Activated T-helper 2 cell treated with anti-CD3 and anti-CD28 coated beads, Interferon-gamma antibody, Interleukin-2, Interleukin-4, amounts not matched to agents 10 μg/mL and 5 μg/mL and 100 μg/mL, durations not matched to agents 14 hours and 24 hours and 36 hours (primary cell): ENCODE measurements at regions of chr1 and their contacts with region 1.

Region 1: DNA sequence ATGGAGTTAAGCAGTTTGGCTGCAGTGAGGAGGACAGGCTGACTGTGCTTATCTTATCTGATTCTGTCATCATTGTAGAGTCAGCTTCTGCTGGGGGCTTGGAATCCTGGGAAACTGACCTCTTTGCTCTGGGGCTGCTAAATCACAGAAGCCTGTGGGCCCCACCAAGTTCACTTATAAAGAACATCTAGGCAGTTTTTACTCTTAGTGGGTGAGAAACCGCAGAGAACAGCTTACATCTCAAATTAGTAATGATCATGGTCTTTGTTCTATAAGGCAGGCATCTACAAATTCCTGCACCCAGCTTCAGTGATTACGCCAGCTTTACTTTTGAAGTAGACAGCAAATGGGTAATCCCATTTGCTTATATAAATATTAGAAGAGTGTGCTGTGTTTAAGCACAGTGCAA is 75.7 kb downstream of the ZC3H11B start:
- DNase-seq: no peak
- H3K4me3 Mint-ChIP-seq: no peak overlapping the region
- H3K27ac Mint-ChIP-seq: no peak overlapping the region
- H3K4me1 Mint-ChIP-seq: peaks cover 4% of the 10 kb centered on the region
- H3K27me3 Mint-ChIP-seq: peaks cover 5% of the 10 kb centered on the region

Region 2: DNA sequence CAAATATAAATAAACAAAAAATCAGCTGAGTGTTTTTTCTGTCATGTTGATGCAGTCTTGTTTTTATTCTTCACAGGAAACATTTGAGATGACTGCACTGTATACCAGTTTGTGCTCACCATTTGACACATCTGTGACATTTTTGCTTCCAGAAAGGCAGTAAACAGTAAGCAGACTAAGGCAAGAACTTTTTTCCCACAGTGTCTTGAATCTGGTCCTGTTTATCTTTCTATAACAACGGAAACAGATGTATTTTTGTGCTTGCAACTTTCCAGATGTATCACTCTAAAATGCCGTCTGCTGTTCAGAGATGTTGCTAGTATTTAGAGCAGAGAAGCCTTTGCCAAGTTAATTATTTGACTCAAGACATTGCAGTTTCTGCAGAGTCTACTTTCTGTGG is 29.8 kb before region 1 on chr1:
- intact Hi-C with region 1: no loop called
- DNase-seq: no peak
- H3K4me3 Mint-ChIP-seq: no peak overlapping the region
- H3K27ac Mint-ChIP-seq: no peak overlapping the region
- H3K4me1 Mint-ChIP-seq: no peaks in the 10 kb centered on the region
- H3K27me3 Mint-ChIP-seq: peaks cover 2% of the 10 kb centered on the region

Region 3: DNA sequence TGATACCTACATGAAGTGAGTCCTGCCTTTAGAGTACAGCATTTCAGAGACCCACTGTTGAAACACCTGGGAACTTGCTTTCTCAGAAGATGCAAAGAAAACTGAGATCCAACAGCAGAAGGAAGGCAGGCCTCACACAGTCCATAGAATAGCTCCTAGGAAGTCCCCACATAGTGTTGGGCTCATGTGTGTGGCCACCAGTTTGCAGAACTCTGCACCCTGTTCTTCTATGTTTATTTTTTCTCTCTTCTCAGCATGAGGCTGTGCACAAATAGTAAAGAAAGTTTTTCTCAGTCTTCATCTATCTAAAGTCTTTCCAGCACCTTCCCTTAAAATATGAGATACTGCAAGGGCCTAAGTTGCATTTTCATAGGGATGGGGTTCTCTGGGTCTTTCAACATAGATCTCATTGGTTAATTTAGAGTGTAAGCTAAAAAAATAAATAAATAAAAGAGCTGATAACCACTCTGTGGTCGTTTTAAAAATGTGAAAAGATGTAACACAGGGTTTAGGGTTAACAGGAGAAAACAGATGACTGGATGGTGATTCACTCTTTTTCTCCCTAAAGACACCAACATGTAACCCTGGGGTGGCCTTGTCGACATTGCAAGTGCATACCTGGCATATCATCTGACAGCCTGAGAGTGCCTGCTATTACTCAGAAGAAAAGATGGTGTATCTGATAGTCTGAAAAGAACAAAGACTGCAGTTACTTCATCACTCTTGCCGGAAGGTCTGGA is 18.9 kb before region 1 on chr1:
- intact Hi-C with region 1: loop called (anchors 2 kb)
- DNase-seq: peak; percentile 9
- H3K4me3 Mint-ChIP-seq: no peak overlapping the region
- H3K27ac Mint-ChIP-seq: no peak overlapping the region
- H3K4me1 Mint-ChIP-seq: peaks cover 9% of the 10 kb centered on the region
- H3K27me3 Mint-ChIP-seq: no peaks in the 10 kb centered on the region